ENCODE measurements at regions of chr6 and their contacts with region 1.

Region 1: DNA sequence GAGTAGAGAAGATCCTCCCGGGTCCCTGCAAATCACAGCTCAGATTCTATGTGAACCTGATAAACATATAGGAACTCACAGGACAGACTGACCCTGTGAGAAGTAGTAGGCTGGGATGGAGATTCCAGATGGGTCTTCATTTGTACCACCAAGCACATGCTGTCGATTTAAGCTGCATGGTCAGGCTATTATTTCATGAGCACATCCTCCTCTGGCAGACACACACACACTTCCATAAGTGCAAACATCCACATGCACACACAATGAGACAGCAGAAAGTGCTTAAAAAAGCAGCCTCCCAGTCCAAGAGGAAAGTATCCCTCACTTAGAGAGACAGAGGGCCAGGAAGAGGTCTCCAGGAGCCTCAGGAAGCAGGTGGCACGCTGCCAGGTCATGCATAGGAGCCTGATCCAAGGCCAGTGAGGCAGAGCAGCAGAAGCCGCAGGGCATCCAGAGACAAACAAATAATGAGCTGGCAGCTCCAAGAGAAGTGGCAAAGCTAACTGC is 131.8 kb downstream of the UNC5CL start:
- DNase-seq: peak; percentile 9 to 33
- ATAC-seq: peak in 4 of 8 donors; percentile 24 to 57 (median 28)
- H3K4me3 ChIP-seq: no peak overlapping the region
- H3K27ac ChIP-seq: peak overlapping the region in 5 of 10 donors; percentile 9 to 46 (median 23)
- H3K4me1 ChIP-seq: peaks cover 0 to 32% (median 7%) of the 10 kb centered on the region in 9 donors
- H3K27me3 ChIP-seq: no peaks in the 10 kb centered on the region
- CTCF ChIP-seq: no peak

Region 2: GRCh38 chr6:40922281-40922680 is 15.0 kb after region 1 on chr6:
- intact Hi-C with region 1: no loop called
- DNase-seq: no peak
- ATAC-seq: no peak
- H3K4me3 ChIP-seq: no peak overlapping the region
- H3K27ac ChIP-seq: no peak overlapping the region
- H3K4me1 ChIP-seq: no peaks in the 10 kb centered on the region
- H3K27me3 ChIP-seq: no peaks in the 10 kb centered on the region
- CTCF ChIP-seq: no peak

Region 3: GRCh38 chr6:40999569-40999968 is 92.3 kb after region 1 on chr6:
- intact Hi-C with region 1: loop called in 1 of 10 experiments (anchors 10 kb)
- DNase-seq: peak; percentile 43 to 64
- ATAC-seq: peak; percentile 60 to 91 (median 73)
- H3K4me3 ChIP-seq: no peak overlapping the region
- H3K27ac ChIP-seq: peak overlapping the region in 2 of 10 donors; percentile 74 to 82
- H3K4me1 ChIP-seq: peaks cover 0 to 38% (median 14%) of the 10 kb centered on the region in 9 donors
- H3K27me3 ChIP-seq: peaks cover 0 to 13% (median 0%) of the 10 kb centered on the region in 7 donors
- CTCF ChIP-seq: peak in 7 of 9 donors; percentile 38 to 59 (median 53)

Measured in heart right ventricle (tissue), 16 donors.